Pancreas (tissue), 10 donors: ENCODE measurements at regions of chr1 and their contacts with region 1.

Region 1: DNA sequence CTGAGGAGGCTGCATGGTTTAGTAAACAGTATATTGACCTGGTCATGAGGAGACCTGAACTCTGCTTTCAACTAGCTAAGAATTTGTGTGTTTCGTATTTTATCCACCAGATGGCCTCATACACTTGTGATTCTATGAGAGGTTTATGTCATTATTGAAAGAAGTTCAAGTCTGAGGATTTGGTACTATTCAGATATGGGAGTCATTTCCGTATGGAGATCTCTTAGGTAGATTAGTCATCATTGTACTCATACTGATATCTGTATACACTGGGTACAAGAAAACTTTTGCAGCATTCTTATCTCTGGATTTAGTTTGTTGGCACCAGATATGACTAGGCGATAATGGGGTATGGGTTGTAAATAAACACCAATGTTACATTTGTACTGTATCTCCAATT is 26.6 kb downstream of the ATF6 start:
- DNase-seq: no peak
- ATAC-seq: peak; percentile 53 to 86 (median 78)
- H3K4me3 ChIP-seq: no peak overlapping the region
- H3K27ac ChIP-seq: no peak overlapping the region
- H3K4me1 ChIP-seq: peaks cover 0 to 6% (median 0%) of the 10 kb centered on the region in 3 donors
- H3K27me3 ChIP-seq: no peaks in the 10 kb centered on the region
- CTCF ChIP-seq: peak in 3 of 4 donors; percentile 14 to 42 (median 18)

Region 2: DNA sequence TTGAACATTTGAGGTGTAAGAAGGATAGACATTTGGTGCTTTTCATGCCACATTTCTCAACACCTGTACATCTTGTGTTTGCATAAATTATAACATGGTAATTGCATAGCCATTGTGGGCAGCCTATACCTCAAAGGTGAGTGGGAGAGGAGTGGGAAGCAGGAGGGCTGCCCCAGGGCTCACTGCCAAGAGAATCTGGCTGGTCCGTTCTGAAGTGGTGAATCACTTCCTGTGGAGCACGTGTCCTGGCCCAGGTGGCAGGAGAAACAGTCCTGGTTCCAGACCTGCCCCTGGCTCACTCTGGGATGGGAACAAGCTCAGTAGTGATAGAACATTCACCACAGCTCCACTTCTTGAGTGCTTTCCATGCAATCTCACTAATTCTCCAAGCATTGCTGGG is 242.5 kb after region 1 on chr1:
- intact Hi-C with region 1: loop called in 2 of 3 experiments (anchors 2 to 5 kb)
- DNase-seq: peak in 2 of 6 donors; percentile 39 to 41
- ATAC-seq: peak in 1 of 4 donors; percentile 31
- H3K4me3 ChIP-seq: no peak overlapping the region
- H3K27ac ChIP-seq: no peak overlapping the region
- H3K4me1 ChIP-seq: no peaks in the 10 kb centered on the region
- H3K27me3 ChIP-seq: no peaks in the 10 kb centered on the region
- CTCF ChIP-seq: no peak

Region 3: GRCh38 chr1:162087111-162087510 is 294.4 kb after region 1 on chr1:
- intact Hi-C with region 1: no loop called
- DNase-seq: no peak
- ATAC-seq: no peak
- H3K4me3 ChIP-seq: no peak overlapping the region
- H3K27ac ChIP-seq: no peak overlapping the region
- H3K4me1 ChIP-seq: no peaks in the 10 kb centered on the region
- H3K27me3 ChIP-seq: no peaks in the 10 kb centered on the region
- CTCF ChIP-seq: no peak